Heart left ventricle (tissue), 16 donors: ENCODE measurements at regions of chr21 and their contacts with region 1.

Region 1: GRCh38 chr21:16419188-16419921 is 689.6 kb downstream of the USP25 start:
- DNase-seq: peak; percentile 78 to 90 (median 85)
- ATAC-seq: peak; percentile 85 to 96 (median 93)
- H3K4me3 ChIP-seq: peak overlapping the region; percentile 11 to 67 (median 54)
- H3K27ac ChIP-seq: peak overlapping the region; percentile 73 to 89 (median 86)
- H3K4me1 ChIP-seq: peaks cover 0 to 18% (median 7%) of the 10 kb centered on the region in 12 donors
- H3K27me3 ChIP-seq: no peaks in the 10 kb centered on the region
- CTCF ChIP-seq: no peak
- POLR2A ChIP-seq: no peak

Region 2: DNA sequence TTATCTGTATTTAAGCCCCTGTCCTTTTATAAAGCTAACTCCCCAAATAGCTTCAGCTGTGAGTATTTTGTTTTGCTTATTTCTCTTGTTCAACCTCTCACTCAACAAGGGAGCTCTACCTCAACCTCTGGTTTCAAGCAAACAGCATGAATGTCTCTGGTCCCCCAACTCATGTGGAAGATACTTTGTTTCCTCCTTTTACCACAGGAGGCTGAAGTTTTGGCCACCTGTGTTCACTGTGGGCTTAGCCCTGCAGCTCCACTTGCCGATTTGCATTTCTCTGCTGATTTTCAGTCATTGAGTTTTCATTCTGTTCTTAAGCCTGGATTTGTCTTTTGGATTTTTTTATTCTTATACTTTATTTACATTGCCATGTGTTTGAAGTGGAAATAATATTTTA is 76.4 kb before region 1 on chr21:
- intact Hi-C with region 1: no loop called
- DNase-seq: no peak
- ATAC-seq: no peak
- H3K4me3 ChIP-seq: no peak overlapping the region
- H3K27ac ChIP-seq: no peak overlapping the region
- H3K4me1 ChIP-seq: no peaks in the 10 kb centered on the region
- H3K27me3 ChIP-seq: no peaks in the 10 kb centered on the region
- CTCF ChIP-seq: no peak
- POLR2A ChIP-seq: no peak

Region 3: GRCh38 chr21:16377120-16377658 is 42.2 kb before region 1 on chr21:
- intact Hi-C with region 1: loop called in 2 of 10 experiments (anchors 5 to 10 kb)
- DNase-seq: no peak
- ATAC-seq: peak; percentile 38 to 56 (median 46)
- H3K4me3 ChIP-seq: no peak overlapping the region
- H3K27ac ChIP-seq: peak overlapping the region; percentile 16 to 78 (median 68)
- H3K4me1 ChIP-seq: peaks cover 0 to 45% (median 29%) of the 10 kb centered on the region in 12 donors
- H3K27me3 ChIP-seq: no peaks in the 10 kb centered on the region
- CTCF ChIP-seq: no peak
- POLR2A ChIP-seq: no peak

Region 4: GRCh38 chr21:16388911-16389515 is 30.3 kb before region 1 on chr21:
- intact Hi-C with region 1: no loop called
- DNase-seq: no peak
- ATAC-seq: no peak
- H3K4me3 ChIP-seq: no peak overlapping the region
- H3K27ac ChIP-seq: no peak overlapping the region
- H3K4me1 ChIP-seq: peaks cover 0 to 9% (median 0%) of the 10 kb centered on the region in 12 donors
- H3K27me3 ChIP-seq: no peaks in the 10 kb centered on the region
- CTCF ChIP-seq: no peak
- POLR2A ChIP-seq: no peak

Region 5: GRCh38 chr21:16540966-16541746 is 121.8 kb after region 1 on chr21:
- intact Hi-C with region 1: loop called in 7 of 10 experiments (anchors 2 to 10 kb)
- DNase-seq: no peak
- ATAC-seq: no peak
- H3K4me3 ChIP-seq: no peak overlapping the region
- H3K27ac ChIP-seq: no peak overlapping the region
- H3K4me1 ChIP-seq: peaks cover 0 to 16% (median 3%) of the 10 kb centered on the region in 12 donors
- H3K27me3 ChIP-seq: no peaks in the 10 kb centered on the region
- CTCF ChIP-seq: no peak
- POLR2A ChIP-seq: no peak

Region 6: DNA sequence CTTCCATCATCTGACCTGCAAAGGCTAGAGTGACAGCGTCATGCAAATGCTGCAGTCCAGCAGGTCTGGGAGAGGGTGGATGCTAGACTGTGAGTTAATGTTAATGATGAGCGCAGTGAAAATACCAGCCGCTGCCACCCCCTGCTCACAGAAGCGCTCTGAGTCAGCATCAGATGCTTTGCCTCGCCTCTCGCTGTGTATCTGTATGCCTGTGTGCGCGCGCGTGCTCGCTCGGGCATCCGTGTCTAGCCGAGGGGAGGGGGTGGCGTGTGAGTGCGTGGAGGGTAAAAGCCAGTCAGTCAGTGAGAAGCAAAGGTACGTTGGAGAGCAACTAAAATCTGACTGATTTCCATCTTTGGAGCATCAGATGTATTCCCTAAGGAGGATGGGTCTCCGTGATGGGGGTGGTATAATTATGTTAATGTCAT is 169.1 kb after region 1 on chr21:
- intact Hi-C with region 1: loop called in 3 of 10 experiments (anchors 5 to 10 kb)
- DNase-seq: peak; percentile 45 to 74 (median 59)
- ATAC-seq: peak; percentile 79 to 94 (median 90)
- H3K4me3 ChIP-seq: peak overlapping the region in 11 of 12 donors; percentile 16 to 53 (median 45)
- H3K27ac ChIP-seq: peak overlapping the region in 11 of 12 donors; percentile 33 to 76 (median 67)
- H3K4me1 ChIP-seq: peaks cover 0 to 40% (median 19%) of the 10 kb centered on the region in 12 donors
- H3K27me3 ChIP-seq: no peaks in the 10 kb centered on the region
- CTCF ChIP-seq: no peak
- POLR2A ChIP-seq: no peak